ENCODE measurements at regions of chr2 and their contacts with region 1.

Region 1: DNA sequence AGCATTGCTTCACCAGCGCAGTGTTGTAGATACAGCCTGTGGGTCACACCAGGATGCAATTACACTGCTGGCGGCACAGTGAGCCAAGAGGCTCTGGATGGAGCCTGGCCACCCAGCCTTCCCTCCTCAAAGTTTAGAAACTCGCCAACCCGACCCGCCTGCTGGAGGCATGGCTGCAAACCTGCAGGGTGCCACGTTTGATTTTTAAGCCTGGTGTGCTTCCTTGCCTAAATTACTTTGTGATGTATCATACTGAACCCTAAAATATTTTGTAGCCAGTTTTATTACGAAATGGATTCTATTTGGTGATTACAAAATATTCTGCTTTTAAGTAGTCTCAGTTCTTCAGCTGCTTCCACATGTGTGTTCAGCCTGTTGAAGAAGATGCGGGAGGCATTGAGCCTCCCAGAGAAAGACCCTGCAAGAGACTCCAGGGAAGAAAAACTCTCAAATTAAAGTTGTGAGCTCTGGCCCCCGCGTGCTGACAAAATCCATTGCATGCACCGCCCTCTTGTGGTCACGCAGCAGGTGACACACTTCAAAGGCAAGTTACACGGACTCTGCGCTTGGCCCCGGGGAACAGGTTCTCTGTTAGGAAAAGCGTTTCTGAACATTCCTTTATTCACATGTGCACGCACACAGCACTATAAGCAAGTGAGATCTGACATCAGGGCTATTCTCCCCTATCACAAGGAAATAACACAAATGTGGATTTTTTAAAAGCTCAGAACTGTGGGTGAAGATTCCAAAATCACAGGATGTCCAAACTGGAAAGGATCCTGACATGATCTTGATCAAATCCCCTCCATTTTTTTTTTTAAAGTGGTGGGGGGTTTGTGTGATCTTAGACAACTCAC is 63.0 kb upstream of the TWIST2 start:
- DNase-seq: peak; percentile 67
- ATAC-seq: peak; percentile 61
- H3K4me3 Mint-ChIP-seq: no peak overlapping the region
- H3K27ac Mint-ChIP-seq: no peak overlapping the region
- H3K4me1 Mint-ChIP-seq: no peaks in the 10 kb centered on the region
- H3K27me3 Mint-ChIP-seq: peaks cover 15% of the 10 kb centered on the region

Region 2: DNA sequence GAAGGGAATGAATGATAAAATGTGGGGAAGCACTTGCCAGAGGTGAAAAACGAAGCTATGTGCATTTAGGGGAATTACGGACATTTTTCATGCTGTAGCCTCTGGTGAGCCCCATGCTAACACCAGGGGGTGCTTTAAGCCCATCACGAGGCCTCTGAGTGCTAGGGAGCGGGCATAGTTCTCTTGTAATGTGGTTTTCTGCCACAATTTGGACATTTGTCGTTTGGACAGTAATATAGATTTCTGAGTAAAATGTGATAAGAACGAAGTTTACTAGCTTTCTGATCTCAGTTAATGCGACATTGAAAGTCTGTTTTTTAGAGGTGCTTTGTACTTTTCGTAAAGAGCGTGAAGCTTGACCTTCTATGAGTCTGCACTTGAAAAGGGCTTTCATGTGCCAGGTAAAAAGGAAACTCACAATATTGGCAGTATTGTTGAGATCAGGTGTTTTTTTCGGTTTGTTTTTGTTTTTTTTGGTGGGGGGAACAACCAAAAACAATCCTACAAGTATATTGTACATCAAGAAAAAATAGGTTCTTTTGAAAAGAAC is 414.0 kb before region 1 on chr2:
- CTCF ChIA-PET with region 1: interaction called, 12 read pairs
- DNase-seq: peak; percentile 67
- ATAC-seq: peak; percentile 76
- H3K4me3 Mint-ChIP-seq: no peak overlapping the region
- H3K27ac Mint-ChIP-seq: no peak overlapping the region
- H3K4me1 Mint-ChIP-seq: peaks cover 5% of the 10 kb centered on the region
- H3K27me3 Mint-ChIP-seq: no peaks in the 10 kb centered on the region

Region 3: DNA sequence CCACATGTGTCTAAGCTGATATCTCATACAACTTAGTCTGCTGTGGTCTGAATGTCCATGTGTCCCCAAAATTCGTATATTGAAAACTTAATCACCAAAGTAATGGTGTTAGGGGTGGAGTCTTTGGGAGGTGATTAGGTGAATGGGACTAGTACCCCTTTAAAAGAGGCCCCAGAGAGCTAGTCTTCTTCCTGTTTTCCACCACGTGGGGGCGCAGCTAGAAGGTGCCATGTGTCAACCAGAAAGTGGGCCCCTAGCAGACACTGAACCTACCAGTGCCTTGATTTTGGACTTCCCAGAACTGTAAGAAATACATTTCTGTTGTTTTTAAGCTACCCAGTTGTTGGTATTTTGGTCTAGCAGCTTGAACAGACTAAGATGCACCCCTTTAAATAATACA is 271.6 kb before region 1 on chr2:
- CTCF ChIA-PET with region 1: interaction called, 13 read pairs
- DNase-seq: peak; percentile 62
- ATAC-seq: peak; percentile 63
- H3K4me3 Mint-ChIP-seq: no peak overlapping the region
- H3K27ac Mint-ChIP-seq: no peak overlapping the region
- H3K4me1 Mint-ChIP-seq: peaks cover 4% of the 10 kb centered on the region
- H3K27me3 Mint-ChIP-seq: peaks cover 10% of the 10 kb centered on the region